PC-3 (cell line): ENCODE measurements at regions of chr3 and their contacts with region 1.

Region 1: DNA sequence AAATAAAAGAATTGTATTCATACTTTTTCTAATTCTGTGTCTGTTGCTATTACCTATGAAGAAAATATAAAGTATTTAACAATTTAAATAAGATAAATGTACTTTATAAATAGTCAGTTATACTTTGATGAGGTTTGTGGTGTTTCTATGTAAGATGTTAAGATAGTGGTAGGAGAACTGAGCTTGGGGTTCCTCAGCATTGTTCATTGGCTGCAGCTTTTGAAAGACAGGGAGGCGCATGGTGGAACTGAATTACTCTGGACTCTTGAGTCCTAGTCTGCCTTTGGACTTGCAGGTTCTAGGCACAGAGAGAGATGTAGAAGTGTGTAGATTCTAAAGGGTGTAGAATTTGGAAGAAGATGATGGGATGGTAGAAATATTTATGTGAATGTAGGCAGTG is 23.1 kb downstream of the LMLN start:
- DNase-seq: no peak
- ATAC-seq: no peak
- H3K4me3 ChIP-seq: no peak overlapping the region
- H3K27ac ChIP-seq: no peak overlapping the region
- H3K4me1 ChIP-seq: no peaks in the 10 kb centered on the region
- H3K27me3 ChIP-seq: no peaks in the 10 kb centered on the region
- CTCF ChIP-seq: no peak

Region 2: GRCh38 chr3:198021320-198021719 is 38.2 kb after region 1 on chr3:
- CTCF ChIA-PET with region 1: no interaction called
- POLR2A ChIA-PET with region 1: no interaction called
- intact Hi-C with region 1: loop called (anchors 5 kb)
- DNase-seq: no peak
- ATAC-seq: no peak
- H3K4me3 ChIP-seq: no peak overlapping the region
- H3K27ac ChIP-seq: no peak overlapping the region
- H3K4me1 ChIP-seq: no peaks in the 10 kb centered on the region
- H3K27me3 ChIP-seq: no peaks in the 10 kb centered on the region
- CTCF ChIP-seq: no peak